CD4-positive, alpha-beta T cell (primary cell): ENCODE measurements at regions of chr4 and their contacts with region 1.

Region 1: DNA sequence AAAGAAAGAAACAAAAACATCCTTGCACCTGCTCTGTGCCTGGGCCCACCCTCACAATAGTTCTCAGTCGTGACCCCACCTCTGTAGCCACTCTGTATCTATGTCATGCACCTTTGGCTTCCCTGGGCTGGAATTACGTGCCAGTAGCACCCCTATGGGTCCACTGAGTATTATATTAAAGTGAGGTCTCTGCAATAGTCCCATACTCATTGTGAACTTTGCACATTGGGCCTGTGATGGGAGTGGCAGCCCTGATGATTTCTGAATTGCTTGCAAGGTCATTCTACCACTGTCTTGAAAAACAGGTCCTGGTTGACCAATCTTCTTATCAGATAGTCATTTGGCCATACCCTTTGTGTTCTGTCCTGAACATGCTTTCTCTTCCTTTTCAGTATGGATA is 1012.1 kb downstream of the RAB28 start:
- DNase-seq: no peak
- ATAC-seq: no peak
- H3K4me3 ChIP-seq: no peak overlapping the region
- H3K4me3 Mint-ChIP-seq: no peak overlapping the region
- H3K27ac ChIP-seq: no peak overlapping the region
- H3K27ac Mint-ChIP-seq: no peak overlapping the region
- H3K4me1 ChIP-seq: no peaks in the 10 kb centered on the region
- H3K4me1 Mint-ChIP-seq: no peaks in the 10 kb centered on the region
- H3K27me3 ChIP-seq: no peaks in the 10 kb centered on the region
- H3K27me3 Mint-ChIP-seq: no peaks in the 10 kb centered on the region
- CTCF ChIP-seq: no peak

Region 2: GRCh38 chr4:11471618-11472017 is 1000.5 kb before region 1 on chr4:
- CTCF ChIA-PET with region 1: no interaction called
- POLR2A ChIA-PET with region 1: no interaction called
- intact Hi-C with region 1: no loop called
- DNase-seq: peak; percentile 3 to 91 (median 46)
- ATAC-seq: peak; percentile 96
- H3K4me3 ChIP-seq: peak overlapping the region; percentile 49
- H3K4me3 Mint-ChIP-seq: peak overlapping the region; percentile 83
- H3K27ac ChIP-seq: peak overlapping the region; percentile 59 to 69
- H3K27ac Mint-ChIP-seq: peak overlapping the region; percentile 92
- H3K4me1 ChIP-seq: peaks cover 26% of the 10 kb centered on the region
- H3K4me1 Mint-ChIP-seq: peaks cover 36% of the 10 kb centered on the region
- H3K27me3 ChIP-seq: no peaks in the 10 kb centered on the region
- H3K27me3 Mint-ChIP-seq: no peaks in the 10 kb centered on the region
- CTCF ChIP-seq: no peak

Region 3: GRCh38 chr4:12165616-12166015 is 306.5 kb before region 1 on chr4:
- CTCF ChIA-PET with region 1: no interaction called
- POLR2A ChIA-PET with region 1: no interaction called
- intact Hi-C with region 1: loop called in 1 of 2 experiments (anchors 5 kb)
- DNase-seq: peak in 2 of 14 experiments; percentile 2 to 16
- ATAC-seq: no peak
- H3K4me3 ChIP-seq: no peak overlapping the region
- H3K4me3 Mint-ChIP-seq: no peak overlapping the region
- H3K27ac ChIP-seq: no peak overlapping the region
- H3K27ac Mint-ChIP-seq: no peak overlapping the region
- H3K4me1 ChIP-seq: no peaks in the 10 kb centered on the region
- H3K4me1 Mint-ChIP-seq: no peaks in the 10 kb centered on the region
- H3K27me3 ChIP-seq: no peaks in the 10 kb centered on the region
- H3K27me3 Mint-ChIP-seq: no peaks in the 10 kb centered on the region
- CTCF ChIP-seq: no peak

Region 4: DNA sequence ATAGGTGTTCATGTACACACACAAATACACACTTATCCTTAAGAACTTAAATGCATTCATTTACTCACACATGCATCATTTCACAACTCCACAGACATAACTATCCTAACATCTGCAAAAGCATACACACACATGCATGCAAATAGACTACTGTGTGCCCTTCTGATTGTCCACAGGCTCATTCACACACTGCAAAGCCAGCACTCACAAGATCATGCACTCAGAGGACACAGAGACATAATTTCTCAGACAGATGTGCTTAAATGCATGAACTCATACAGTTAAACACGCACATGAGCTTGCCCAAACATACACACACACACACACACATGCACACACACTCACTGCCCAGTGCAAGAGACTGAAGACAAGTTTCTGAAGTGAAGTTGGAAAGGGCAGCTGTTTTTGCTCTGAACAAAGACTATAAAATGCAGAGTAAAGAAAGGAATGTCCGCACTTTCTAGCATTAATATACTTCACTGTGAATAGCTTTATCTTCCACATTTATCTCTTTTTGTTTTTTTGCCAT is 25.4 kb before region 1 on chr4:
- CTCF ChIA-PET with region 1: no interaction called
- POLR2A ChIA-PET with region 1: no interaction called
- intact Hi-C with region 1: no loop called
- DNase-seq: no peak
- ATAC-seq: no peak
- H3K4me3 ChIP-seq: no peak overlapping the region
- H3K4me3 Mint-ChIP-seq: no peak overlapping the region
- H3K27ac ChIP-seq: no peak overlapping the region
- H3K27ac Mint-ChIP-seq: no peak overlapping the region
- H3K4me1 ChIP-seq: no peaks in the 10 kb centered on the region
- H3K4me1 Mint-ChIP-seq: no peaks in the 10 kb centered on the region
- H3K27me3 ChIP-seq: no peaks in the 10 kb centered on the region
- H3K27me3 Mint-ChIP-seq: no peaks in the 10 kb centered on the region
- CTCF ChIP-seq: no peak

Region 5: DNA sequence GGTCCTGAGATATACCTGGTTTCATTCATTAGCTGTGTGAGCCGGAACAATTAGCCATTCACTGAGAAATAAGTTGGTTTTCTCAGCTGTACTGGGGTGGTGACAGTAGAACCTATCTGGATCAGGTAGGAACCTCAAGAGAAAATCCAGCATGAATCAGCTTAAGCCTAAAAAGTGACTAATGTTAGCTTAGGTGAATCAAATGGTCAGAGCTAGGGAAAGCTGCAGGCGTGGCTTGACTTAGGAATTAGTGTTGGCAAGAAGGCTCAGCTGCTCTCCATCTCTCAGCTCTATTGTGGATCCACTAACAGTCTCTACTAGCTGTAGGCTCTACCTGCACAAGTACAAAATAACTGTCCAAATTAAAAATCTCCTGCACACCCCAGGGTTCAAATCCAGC is 13.5 kb before region 1 on chr4:
- CTCF ChIA-PET with region 1: no interaction called
- POLR2A ChIA-PET with region 1: no interaction called
- intact Hi-C with region 1: no loop called
- DNase-seq: no peak
- ATAC-seq: no peak
- H3K4me3 ChIP-seq: no peak overlapping the region
- H3K4me3 Mint-ChIP-seq: no peak overlapping the region
- H3K27ac ChIP-seq: no peak overlapping the region
- H3K27ac Mint-ChIP-seq: no peak overlapping the region
- H3K4me1 ChIP-seq: no peaks in the 10 kb centered on the region
- H3K4me1 Mint-ChIP-seq: no peaks in the 10 kb centered on the region
- H3K27me3 ChIP-seq: no peaks in the 10 kb centered on the region
- H3K27me3 Mint-ChIP-seq: no peaks in the 10 kb centered on the region
- CTCF ChIP-seq: no peak